ENCODE measurements at regions of chr5 and their contacts with region 1.

Region 1: DNA sequence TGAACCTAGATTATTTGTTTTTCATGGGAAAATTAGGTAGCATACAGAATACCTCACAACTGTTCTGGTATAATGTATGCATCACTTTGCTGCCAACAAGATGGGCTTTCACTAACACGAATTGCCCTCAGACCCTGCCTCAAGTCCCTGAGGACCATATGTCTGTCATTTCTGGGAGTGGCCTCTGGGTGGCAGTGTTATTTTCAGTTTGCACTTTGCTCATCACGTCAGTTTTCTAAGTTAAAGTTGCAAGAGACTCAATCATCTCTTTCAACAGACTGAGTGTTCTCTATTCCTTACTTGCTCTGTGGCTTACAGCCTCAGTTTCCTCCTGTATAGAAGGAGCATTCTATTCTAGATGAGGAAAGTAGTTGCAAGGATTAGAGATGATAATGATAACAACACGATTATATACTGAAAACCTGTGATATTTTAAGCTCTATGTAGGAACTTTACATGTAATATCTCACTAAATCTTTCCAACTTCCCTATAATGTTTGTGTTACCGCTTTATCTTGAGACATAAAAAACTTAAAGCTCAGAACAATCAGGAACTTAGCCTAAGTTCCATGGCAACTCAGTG is 55.7 kb downstream of the TSSK1B start:
- DNase-seq: peak; percentile 81
- H3K4me3 Mint-ChIP-seq: no peak overlapping the region
- H3K27ac Mint-ChIP-seq: no peak overlapping the region
- H3K4me1 Mint-ChIP-seq: peaks cover 19% of the 10 kb centered on the region
- H3K27me3 Mint-ChIP-seq: peaks cover 8% of the 10 kb centered on the region

Region 2: DNA sequence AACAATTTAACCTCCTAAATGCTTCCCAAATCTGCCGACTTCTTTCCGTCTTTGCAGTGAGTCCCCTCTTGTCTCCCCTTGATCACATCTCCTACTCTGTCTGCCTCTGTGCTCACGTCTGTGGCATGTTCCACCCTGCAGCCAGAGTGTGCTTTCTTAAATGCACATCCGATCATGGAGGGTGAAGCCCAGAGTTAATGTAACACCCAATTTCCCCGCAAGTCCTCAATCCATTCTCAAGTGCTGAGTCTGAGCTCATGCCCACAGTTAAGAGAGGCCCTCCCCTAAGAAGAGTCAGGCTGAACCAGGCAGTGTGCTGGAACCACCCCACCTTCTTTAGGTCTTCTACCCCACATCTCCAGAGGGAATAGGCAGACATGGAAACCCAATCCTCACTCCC is 1124.7 kb before region 1 on chr5:
- CTCF ChIA-PET with region 1: no interaction called
- intact Hi-C with region 1: no loop called
- DNase-seq: no peak
- H3K4me3 Mint-ChIP-seq: no peak overlapping the region
- H3K27ac Mint-ChIP-seq: no peak overlapping the region
- H3K4me1 Mint-ChIP-seq: no peaks in the 10 kb centered on the region
- H3K27me3 Mint-ChIP-seq: peaks cover 1% of the 10 kb centered on the region

Region 3: GRCh38 chr5:113336975-113337374 is 42.1 kb before region 1 on chr5:
- CTCF ChIA-PET with region 1: interaction called, 4 read pairs
- intact Hi-C with region 1: loop called (anchors 2 kb)
- DNase-seq: no peak
- H3K4me3 Mint-ChIP-seq: no peak overlapping the region
- H3K27ac Mint-ChIP-seq: no peak overlapping the region
- H3K4me1 Mint-ChIP-seq: peaks cover 6% of the 10 kb centered on the region
- H3K27me3 Mint-ChIP-seq: peaks cover 7% of the 10 kb centered on the region

Region 4: DNA sequence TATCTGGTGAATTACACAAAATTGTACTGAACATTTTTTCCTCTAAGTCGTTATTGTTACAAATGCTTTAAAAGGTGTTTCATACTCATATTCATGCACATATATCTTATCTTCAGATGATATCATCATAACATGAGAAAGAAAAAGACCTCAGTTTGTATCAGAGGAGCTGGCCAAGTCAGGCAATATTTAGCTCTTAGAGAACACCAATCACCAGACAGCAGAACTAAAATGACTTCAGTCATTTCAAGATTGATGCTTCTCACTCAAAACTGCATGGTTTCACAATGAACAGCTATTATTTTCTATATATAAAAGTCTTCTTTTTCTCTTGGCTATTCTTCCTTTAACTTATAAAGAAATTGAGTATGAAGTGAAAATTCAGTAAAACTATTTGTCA is 11.2 kb after region 1 on chr5:
- CTCF ChIA-PET with region 1: interaction called, 18 read pairs
- intact Hi-C with region 1: no loop called
- DNase-seq: no peak
- H3K4me3 Mint-ChIP-seq: no peak overlapping the region
- H3K27ac Mint-ChIP-seq: no peak overlapping the region
- H3K4me1 Mint-ChIP-seq: no peaks in the 10 kb centered on the region
- H3K27me3 Mint-ChIP-seq: peaks cover 16% of the 10 kb centered on the region

Region 5: GRCh38 chr5:113435575-113435974 is 56.5 kb after region 1 on chr5:
- CTCF ChIA-PET with region 1: no interaction called
- intact Hi-C with region 1: no loop called
- DNase-seq: no peak
- H3K4me3 Mint-ChIP-seq: no peak overlapping the region
- H3K27ac Mint-ChIP-seq: no peak overlapping the region
- H3K4me1 Mint-ChIP-seq: peaks cover 2% of the 10 kb centered on the region
- H3K27me3 Mint-ChIP-seq: no peaks in the 10 kb centered on the region

Region 6: DNA sequence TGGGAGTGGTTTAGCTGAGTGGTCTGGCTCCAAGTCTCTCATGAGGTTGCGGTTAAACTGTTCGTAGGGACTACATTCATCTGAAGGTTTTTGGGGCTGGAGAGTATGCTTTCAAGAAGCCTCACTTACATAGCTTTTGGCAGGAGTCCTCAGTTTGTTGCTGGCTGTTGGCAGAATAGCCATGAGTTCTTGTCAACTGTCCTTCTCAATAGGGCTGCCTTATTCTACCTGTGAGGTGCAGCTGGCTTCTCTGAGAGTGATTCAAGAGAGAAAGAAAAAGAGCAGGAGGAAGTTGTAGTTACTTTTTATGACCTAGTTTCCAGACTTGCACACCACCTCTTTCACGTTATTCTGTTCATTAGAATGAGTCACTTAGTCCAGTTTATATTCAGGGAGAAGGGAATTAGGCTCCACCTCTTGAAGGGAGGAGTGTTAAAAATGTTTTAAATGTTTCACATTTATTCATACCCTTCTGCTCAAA is 167.7 kb after region 1 on chr5:
- CTCF ChIA-PET with region 1: no interaction called
- intact Hi-C with region 1: no loop called
- DNase-seq: peak; percentile 5
- H3K4me3 Mint-ChIP-seq: no peak overlapping the region
- H3K27ac Mint-ChIP-seq: peak overlapping the region; percentile 57
- H3K4me1 Mint-ChIP-seq: peaks cover 13% of the 10 kb centered on the region
- H3K27me3 Mint-ChIP-seq: no peaks in the 10 kb centered on the region

Region 7: DNA sequence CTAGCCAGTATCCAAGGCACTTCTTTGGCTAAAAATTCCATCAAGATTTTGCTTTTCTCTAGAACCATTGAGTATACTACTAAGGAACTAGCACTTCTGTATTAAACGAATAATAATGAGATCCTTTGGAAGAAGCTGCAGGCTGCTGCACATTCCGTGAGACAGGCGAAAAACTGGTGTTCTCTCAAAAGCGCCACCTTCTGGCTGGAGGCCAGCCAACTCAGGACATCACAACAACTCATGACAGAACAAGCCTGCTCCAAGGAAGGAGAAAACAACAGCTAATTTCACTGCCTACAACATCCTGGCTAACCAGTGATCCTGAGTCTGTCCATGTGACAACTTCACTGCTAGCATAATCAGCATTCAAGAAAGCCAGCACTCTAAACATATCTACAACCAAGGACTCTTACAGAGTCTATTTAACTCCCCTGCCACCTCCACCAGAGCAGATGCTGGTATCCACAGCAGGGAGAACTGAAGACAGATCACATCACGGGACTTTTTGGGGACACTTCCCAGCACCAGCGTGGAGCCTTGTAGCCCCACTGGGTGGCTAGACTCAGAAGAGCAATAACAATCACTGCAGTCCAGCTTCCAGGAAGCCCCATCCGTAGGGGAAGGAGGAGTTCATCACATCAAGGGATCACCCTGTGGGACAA is 285.0 kb after region 1 on chr5:
- CTCF ChIA-PET with region 1: no interaction called
- intact Hi-C with region 1: loop called (anchors 5 kb)
- DNase-seq: peak; percentile 40
- H3K4me3 Mint-ChIP-seq: no peak overlapping the region
- H3K27ac Mint-ChIP-seq: no peak overlapping the region
- H3K4me1 Mint-ChIP-seq: no peaks in the 10 kb centered on the region
- H3K27me3 Mint-ChIP-seq: peaks cover 24% of the 10 kb centered on the region

Measured in activated naive CD4-positive, alpha-beta T cell treated with anti-CD3 and anti-CD28 coated beads for 36 hours (primary cell).